Activated T-helper 2 cell treated with anti-CD3 and anti-CD28 coated beads, Interferon-gamma antibody, Interleukin-2, Interleukin-4, amounts not matched to agents 10 μg/mL and 5 μg/mL and 100 μg/mL, durations not matched to agents 14 hours and 24 hours and 36 hours (primary cell): ENCODE measurements at regions of chr1 and their contacts with region 1.

Region 1: DNA sequence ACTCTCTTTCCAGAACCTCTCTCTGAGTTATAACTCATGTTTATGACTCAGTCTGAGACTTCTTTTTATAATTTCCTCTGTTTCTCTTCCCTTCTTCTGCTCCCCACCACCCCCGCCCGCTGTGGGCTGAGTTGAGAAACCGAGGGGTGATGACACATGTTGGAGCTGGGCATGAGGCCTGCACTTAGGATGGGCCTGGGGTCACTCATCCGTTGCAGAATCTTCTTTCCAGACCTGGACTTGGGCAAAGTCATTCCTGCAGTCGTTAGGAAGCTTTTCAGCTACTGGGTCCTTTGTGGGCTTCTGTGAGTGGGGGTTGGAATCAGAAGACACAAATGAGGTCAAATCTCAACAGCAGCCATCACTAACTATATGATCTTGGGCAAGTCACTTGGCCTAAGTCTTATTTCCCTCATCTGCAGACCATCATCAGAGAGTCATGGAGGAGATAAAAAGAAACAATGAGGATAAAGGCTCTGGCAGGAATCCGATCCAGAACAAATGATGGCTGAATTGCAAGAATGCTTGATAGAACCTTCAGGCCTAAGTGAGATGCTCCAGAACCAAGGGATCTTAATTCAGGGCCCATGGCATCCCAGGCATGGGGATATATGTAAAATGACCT is 53.4 kb downstream of the RPS6KA1 start:
- DNase-seq: peak; percentile 22
- H3K4me3 Mint-ChIP-seq: peak overlapping the region; percentile 31
- H3K27ac Mint-ChIP-seq: peak overlapping the region; percentile 94
- H3K4me1 Mint-ChIP-seq: peaks cover 45% of the 10 kb centered on the region
- H3K27me3 Mint-ChIP-seq: no peaks in the 10 kb centered on the region

Region 2: DNA sequence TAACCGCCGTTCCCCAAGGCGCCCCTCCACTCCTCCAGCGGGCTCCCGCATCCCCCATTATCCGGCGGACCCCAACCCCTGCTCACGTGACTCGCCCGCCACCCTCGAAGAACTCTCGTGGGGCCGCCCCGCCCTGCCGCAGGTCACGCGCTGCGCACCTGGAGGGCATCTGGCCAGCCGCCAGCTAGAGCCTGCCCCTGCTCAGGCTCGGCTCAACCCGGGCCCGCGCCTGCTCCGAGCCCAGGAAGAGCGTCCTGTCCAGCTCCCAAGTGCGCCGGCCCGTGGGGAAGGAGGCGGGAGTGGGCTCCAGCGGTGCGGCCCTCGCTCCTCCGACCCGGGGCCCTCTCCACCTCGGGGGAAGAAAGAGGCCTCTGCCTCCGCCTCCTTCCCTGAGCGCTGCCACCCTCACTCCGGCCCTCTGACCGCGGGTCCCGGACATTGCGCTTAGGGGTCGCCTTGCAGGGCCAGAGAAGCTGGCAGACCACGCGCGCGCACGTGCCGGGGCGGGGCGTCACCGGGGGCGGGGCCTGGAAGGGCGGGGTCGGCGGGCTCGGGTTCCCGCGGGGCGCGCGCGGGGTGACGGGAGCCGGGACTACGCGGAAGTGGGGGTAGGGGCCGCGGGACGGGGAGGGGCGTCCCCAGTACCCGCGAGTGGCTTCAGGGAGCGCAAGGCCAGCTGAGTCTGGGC is 82.3 kb before region 1 on chr1:
- intact Hi-C with region 1: loop called (anchors 1 kb)
- DNase-seq: peak; percentile 85
- H3K4me3 Mint-ChIP-seq: peak overlapping the region; percentile 87
- H3K27ac Mint-ChIP-seq: peak overlapping the region; percentile 89
- H3K4me1 Mint-ChIP-seq: peaks cover 21% of the 10 kb centered on the region
- H3K27me3 Mint-ChIP-seq: no peaks in the 10 kb centered on the region

Region 3: DNA sequence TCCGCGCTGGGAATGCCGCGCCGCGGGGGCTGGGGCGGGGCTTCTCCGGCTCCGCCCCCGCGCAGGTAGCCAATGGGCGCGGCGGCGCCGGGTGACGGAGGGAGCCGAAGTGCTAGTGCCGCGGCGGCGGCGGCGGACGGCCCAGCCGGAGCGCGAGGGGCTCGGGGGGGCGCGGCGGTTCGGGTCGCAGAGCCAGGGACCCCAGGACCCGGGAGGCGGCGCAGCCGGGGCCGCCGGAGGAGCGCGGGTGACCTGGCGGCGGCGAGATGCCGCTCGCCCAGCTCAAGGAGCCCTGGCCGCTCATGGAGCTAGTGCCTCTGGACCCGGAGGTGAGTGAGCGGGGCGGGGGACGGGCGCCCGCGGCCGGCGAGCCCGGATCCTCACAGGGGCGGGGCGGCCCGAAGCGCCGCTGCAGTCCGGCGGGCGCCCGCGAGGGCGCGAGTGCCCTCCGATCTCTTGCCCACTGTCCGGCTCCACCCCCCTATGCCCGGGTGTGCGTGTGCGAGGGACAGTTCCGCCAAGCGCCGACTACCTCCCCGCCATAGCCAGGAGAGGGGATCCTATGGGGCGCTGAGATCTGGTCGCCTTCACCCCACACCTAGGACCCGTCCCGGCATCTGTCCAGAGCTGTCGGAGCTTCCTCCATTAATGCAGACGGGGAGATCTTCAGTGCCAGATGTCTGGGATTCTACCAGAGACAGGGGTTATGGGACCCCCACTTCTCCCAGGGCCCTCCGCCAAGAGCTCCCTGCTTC is 53.1 kb before region 1 on chr1 and contains the start of gene RPS6KA1:
- intact Hi-C with region 1: no loop called
- DNase-seq: peak; percentile 65
- H3K4me3 Mint-ChIP-seq: peak within 1 kb of the TSS; percentile 96
- H3K27ac Mint-ChIP-seq: peak within 1 kb of the TSS; percentile 93
- H3K4me1 Mint-ChIP-seq: peaks cover 21% of the 10 kb centered on the region
- H3K27me3 Mint-ChIP-seq: peaks cover 5% of the 10 kb centered on the region
- total RNA-seq, gene RPS6KA1: 190 and 199 TPM in 2 replicates

Region 4: GRCh38 chr1:26541816-26542711 is 40.9 kb before region 1 on chr1:
- intact Hi-C with region 1: loop called (anchors 1 kb)
- DNase-seq: peak; percentile 73
- H3K4me3 Mint-ChIP-seq: peak overlapping the region; percentile 77
- H3K27ac Mint-ChIP-seq: peak overlapping the region; percentile 97
- H3K4me1 Mint-ChIP-seq: peaks cover 67% of the 10 kb centered on the region
- H3K27me3 Mint-ChIP-seq: no peaks in the 10 kb centered on the region

Region 5: GRCh38 chr1:26695356-26696118 is 112.6 kb after region 1 on chr1 and contains the start of gene ARID1A:
- intact Hi-C with region 1: loop called (anchors 2 kb)
- DNase-seq: peak; percentile 97
- H3K4me3 Mint-ChIP-seq: peak within 1 kb of the TSS; percentile 88
- H3K27ac Mint-ChIP-seq: peak within 1 kb of the TSS; percentile 98
- H3K4me1 Mint-ChIP-seq: peaks cover 27% of the 10 kb centered on the region
- H3K27me3 Mint-ChIP-seq: no peaks in the 10 kb centered on the region
- total RNA-seq, gene ARID1A: 109 TPM in 2 replicates

Region 6: DNA sequence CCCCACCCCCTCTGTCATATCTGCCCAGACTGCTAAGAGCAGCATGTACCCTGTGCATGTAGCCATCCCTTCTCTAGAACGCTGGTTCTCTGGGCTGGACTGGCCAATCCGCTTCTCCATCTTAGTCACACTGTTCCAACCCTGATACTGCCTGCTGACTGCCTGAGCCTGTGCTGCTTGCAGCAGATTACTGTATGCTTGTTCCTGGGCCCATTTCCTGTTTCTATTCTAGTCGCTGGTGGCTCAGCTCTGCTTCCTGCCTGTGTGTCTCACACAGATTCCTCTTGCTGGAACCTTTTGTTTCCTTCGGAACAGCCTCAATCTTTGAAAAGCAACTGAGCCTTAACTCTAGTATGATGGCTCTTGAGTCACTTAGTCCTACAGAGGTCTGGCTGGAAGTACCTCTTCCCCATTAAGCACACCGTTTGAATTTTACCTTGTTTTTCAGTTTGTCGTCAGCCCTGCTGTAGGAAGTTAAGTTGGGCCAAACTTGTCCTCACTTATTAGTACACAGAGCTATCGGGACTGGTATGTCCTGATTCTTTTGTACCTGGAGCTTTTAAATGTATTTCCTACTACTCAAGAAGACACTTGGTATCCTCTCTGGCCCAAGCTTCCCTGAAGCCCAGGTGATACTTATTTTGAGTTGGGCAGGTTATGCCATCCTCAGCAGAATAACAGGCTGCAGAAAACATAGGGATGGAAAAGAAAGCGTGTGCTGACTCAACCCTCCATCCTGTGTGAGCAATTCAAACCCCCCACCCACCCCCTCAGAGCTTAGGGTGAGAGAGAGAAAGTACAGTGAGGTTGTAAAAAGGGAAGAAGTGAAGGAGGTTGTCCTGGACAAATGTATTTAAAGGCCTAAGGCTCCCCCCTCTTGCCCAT is 161.4 kb after region 1 on chr1:
- intact Hi-C with region 1: loop called (anchors 1 kb)
- DNase-seq: peak; percentile 87
- H3K4me3 Mint-ChIP-seq: peak overlapping the region; percentile 56
- H3K27ac Mint-ChIP-seq: peak overlapping the region; percentile 92
- H3K4me1 Mint-ChIP-seq: peaks cover 71% of the 10 kb centered on the region
- H3K27me3 Mint-ChIP-seq: no peaks in the 10 kb centered on the region

Region 7: GRCh38 chr1:26864610-26865527 is 281.9 kb after region 1 on chr1:
- intact Hi-C with region 1: loop called (anchors 5 kb)
- DNase-seq: peak; percentile 95
- H3K4me3 Mint-ChIP-seq: peak overlapping the region; percentile 93
- H3K27ac Mint-ChIP-seq: peak overlapping the region; percentile 90
- H3K4me1 Mint-ChIP-seq: peaks cover 20% of the 10 kb centered on the region
- H3K27me3 Mint-ChIP-seq: no peaks in the 10 kb centered on the region